PC-3 (cell line): ENCODE measurements at regions of chr14 and their contacts with region 1.

Region 1: DNA sequence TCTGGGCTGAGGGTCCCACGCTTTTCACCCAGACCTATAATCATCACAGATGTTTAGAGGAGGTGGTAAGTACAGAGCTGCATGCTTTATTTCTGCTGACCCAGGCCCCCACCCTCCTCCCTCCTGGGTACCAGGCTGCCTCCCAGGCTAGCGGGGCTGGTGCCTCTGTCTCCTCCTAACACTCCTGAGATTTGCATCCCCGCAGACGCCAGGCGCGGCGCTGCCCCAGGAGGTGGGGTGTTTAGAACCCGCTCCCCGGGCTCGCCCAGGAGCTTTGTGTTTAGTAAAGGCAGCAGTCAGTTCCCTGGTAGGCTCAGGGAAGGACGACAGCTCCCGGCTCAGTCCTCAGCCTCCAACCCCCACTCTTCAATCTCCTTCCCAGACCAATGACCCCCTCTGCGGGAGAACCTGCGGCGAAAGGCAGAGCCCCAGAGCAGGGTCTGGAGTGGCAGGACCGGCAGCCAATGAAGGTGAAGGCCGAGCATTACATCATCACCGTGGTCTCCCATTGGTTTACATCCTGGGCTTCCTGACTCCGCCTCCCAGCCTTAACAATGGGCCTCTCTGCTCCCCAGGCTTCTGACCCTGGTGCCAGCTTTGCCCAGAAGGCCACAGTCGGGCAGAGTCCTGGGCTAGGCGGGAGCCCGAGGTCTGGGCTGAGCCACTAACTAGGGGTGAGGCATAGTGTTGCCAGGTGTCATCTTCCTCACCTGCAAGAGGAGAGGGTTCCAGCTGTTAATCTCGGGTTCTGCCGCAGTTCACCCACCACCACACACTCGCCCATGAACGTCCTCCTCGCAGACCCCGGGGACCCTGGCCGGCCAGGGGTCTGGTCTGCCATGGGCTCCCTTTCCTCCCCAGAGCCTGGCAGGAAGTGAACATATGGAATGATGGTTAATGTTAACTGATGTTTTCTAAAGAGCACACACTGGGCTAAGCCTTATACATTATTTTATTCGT is 57.5 kb downstream of the CALM1 start:
- DNase-seq: peak; percentile 22
- ATAC-seq: peak; percentile 9; the same call in 1 of the 2 replicates
- H3K4me3 ChIP-seq: no peak overlapping the region
- H3K27ac ChIP-seq: no peak overlapping the region
- H3K4me1 ChIP-seq: no peaks in the 10 kb centered on the region
- H3K27me3 ChIP-seq: no peaks in the 10 kb centered on the region
- CTCF ChIP-seq: no peak

Region 2: GRCh38 chr14:90301668-90302090 is 152.6 kb before region 1 on chr14:
- CTCF ChIA-PET with region 1: no interaction called
- POLR2A ChIA-PET with region 1: no interaction called
- intact Hi-C with region 1: no loop called
- DNase-seq: peak; percentile 60
- ATAC-seq: peak; percentile 69
- H3K4me3 ChIP-seq: no peak overlapping the region
- H3K27ac ChIP-seq: no peak overlapping the region
- H3K4me1 ChIP-seq: no peaks in the 10 kb centered on the region
- H3K27me3 ChIP-seq: no peaks in the 10 kb centered on the region
- CTCF ChIP-seq: peak; percentile 66

Region 3: GRCh38 chr14:90489916-90490719 is 35.8 kb after region 1 on chr14:
- CTCF ChIA-PET with region 1: no interaction called
- POLR2A ChIA-PET with region 1: interaction called, 4 read pairs
- intact Hi-C with region 1: loop called (anchors 1 kb)
- DNase-seq: no peak
- ATAC-seq: no peak
- H3K4me3 ChIP-seq: no peak overlapping the region
- H3K27ac ChIP-seq: no peak overlapping the region
- H3K4me1 ChIP-seq: no peaks in the 10 kb centered on the region
- H3K27me3 ChIP-seq: peaks cover 43% of the 10 kb centered on the region
- CTCF ChIP-seq: no peak

Region 4: DNA sequence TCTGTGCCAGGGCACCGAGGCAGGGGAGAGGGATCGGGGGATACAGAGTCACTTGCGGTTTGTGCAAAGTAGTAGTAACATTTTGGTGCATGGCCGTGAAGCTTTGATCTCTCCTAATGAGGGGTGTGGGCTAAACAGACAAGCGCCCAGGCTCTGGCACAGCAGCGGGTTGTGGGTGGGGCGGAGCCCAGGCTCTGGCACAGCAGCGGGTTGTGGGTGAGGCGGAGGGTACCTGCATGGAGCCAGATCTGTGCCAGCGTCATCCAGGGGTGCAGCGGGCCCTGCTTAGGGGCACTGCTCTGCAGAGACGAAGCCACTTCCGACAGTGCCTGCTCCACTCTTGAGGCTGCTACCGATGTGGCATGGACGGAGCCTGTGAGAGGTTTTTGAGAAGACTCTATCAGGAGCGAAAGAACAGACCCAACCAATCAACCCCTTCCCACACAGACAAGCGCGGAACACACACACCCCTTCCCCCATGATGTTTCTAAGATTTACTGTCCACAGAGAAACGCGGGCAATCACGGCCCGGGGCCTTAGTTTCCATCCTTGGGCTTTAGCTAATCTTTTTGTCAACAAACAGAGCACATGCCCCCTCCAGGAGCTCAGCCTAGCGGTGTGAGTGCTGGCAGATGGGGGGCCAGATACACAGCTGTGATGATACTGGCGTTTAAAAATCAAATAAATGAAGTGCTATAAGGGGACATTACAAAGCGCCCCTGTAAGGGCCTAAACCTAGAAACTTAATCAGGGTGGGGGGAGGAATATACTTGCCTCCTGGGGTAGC is 139.1 kb after region 1 on chr14:
- CTCF ChIA-PET with region 1: no interaction called
- POLR2A ChIA-PET with region 1: no interaction called
- intact Hi-C with region 1: loop called (anchors 1 kb)
- DNase-seq: no peak
- ATAC-seq: no peak; the same call in 1 of the 2 replicates
- H3K4me3 ChIP-seq: no peak overlapping the region
- H3K27ac ChIP-seq: no peak overlapping the region
- H3K4me1 ChIP-seq: no peaks in the 10 kb centered on the region
- H3K27me3 ChIP-seq: no peaks in the 10 kb centered on the region
- CTCF ChIP-seq: no peak

Region 5: DNA sequence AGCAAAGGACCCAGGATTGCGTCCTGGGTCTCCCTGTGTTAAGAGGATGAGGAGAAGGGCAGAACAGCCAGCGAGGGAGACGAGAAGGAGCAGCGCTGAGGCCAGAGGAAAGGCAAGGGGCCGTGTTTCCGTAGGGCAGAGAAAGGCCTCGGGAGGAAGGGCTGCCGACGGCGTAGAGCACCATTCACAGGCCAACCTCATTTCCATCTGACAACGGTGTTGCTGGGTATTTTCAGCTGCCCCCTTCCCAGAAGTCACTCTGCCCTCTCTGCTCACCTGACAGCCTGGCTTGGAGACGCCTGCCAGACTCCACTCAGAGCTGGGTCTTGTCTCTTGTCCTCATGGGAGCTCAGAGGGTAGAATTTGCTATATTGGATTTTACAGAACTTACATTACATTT is 738.7 kb after region 1 on chr14:
- CTCF ChIA-PET with region 1: no interaction called
- POLR2A ChIA-PET with region 1: no interaction called
- intact Hi-C with region 1: loop called (anchors 10 kb)
- DNase-seq: no peak
- ATAC-seq: no peak
- H3K4me3 ChIP-seq: no peak overlapping the region
- H3K27ac ChIP-seq: no peak overlapping the region
- H3K4me1 ChIP-seq: no peaks in the 10 kb centered on the region
- H3K27me3 ChIP-seq: no peaks in the 10 kb centered on the region
- CTCF ChIP-seq: no peak